ENCODE measurements at regions of chr2 and their contacts with region 1.

Region 1: DNA sequence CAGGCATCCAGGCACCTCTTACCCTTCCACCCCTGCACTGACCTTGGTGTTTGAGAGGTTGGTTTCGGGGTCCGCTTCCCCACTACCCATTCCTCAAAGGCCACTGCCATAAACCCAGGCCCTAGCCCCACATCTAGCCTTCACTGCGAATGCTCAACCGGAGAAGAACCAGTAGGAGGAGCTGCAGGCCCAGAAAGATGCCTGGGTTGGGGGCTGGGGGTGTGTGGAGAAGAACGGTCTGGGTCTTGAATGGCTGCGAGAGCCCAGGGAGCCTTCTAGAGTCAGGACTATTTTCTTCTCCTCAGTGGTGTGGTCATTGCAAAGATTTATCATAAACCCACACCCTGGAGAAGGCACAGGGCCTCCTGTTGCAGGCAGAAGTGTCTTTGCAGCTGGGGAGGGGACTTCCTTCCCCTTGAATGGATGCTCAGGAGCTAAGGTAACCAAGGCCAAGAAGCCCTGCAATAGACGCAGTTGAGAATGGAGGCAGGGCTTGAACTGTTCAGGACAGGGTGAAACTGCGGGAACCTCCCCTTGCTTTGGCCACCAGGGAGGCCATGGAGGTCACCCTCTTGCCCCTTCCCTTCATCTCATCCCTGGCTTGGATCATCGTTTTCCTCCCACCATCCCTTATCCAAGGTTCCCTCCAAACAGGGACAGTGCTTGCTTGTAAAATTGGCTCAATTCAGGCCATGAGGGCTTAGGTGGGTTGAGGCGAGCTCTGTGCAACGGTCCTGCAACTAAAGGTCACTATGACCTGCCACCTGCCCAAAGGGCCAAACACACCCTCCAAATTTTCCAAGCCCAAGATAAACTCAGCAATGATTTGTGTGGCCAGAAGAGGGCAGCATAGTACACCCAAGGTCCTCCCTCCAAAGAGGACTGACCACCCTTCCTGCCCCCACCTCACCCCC is 20.9 kb downstream of the THNSL2 start:
- DNase-seq: no peak
- ATAC-seq: no peak

Region 2: GRCh38 chr2:88307817-88308216 is 116.8 kb after region 1 on chr2:
- intact Hi-C with region 1: loop called (anchors 2 kb)
- DNase-seq: no peak
- ATAC-seq: no peak

Measured in Right ventricle myocardium inferior (tissue), 1 donor.